Activated CD4-positive, alpha-beta memory T cell treated with anti-CD3 and anti-CD28 coated beads for 36 hours (primary cell): ENCODE measurements at regions of chr6 and their contacts with region 1.

Region 1: GRCh38 chr6:30821862-30822782 is 62.2 kb upstream of the DDR1 start:
- DNase-seq: no peak
- H3K4me3 Mint-ChIP-seq: no peak overlapping the region
- H3K27ac Mint-ChIP-seq: peak overlapping the region; percentile 78
- H3K4me1 Mint-ChIP-seq: peaks cover 76% of the 10 kb centered on the region
- H3K27me3 Mint-ChIP-seq: no peaks in the 10 kb centered on the region

Region 2: GRCh38 chr6:30678964-30679726 is 143.0 kb before region 1 on chr6:
- CTCF ChIA-PET with region 1: interaction called, 3 read pairs
- POLR2A ChIA-PET with region 1: no interaction called
- intact Hi-C with region 1: loop called (anchors 1 kb)
- DNase-seq: peak; percentile 94
- H3K4me3 Mint-ChIP-seq: peak overlapping the region; percentile 100
- H3K27ac Mint-ChIP-seq: peak overlapping the region; percentile 99
- H3K4me1 Mint-ChIP-seq: peaks cover 16% of the 10 kb centered on the region
- H3K27me3 Mint-ChIP-seq: no peaks in the 10 kb centered on the region

Region 3: DNA sequence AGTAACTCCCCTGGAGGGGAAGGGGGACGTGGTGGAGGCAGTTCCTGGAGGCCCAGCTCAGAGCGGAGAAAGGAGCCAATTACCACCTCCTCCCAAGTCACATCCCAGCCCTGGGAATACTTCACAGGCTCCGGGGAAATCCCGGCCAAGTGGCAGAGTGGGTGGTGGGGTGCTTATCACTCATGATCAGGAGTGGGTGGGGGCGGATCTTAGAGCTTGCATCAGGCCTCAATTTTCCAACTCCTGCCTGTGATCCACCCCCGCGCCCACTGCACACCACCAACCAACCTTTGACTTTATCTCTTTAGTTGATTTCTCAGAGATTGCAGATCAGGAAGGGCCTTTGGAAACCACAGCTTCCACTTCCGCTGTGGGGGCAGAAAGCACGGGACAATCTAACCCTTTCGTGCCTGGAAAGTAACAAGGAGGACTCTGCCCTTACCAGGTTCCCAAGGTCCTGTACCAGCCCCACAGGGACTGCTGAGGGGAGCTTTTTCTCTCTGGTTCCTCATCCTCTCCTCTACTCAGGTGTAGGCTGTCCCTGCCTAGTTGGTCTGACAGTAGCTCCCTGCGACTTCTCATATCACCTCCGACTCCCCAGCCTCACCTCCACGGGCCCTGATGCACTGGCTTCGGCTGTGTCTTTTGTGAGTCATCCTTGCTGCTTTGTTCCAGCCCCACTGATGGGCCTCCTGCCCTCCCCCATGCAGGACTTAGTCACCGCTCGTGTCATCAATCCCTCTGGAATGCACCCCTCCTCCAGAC is 52.9 kb before region 1 on chr6:
- CTCF ChIA-PET with region 1: interaction called, 18 read pairs
- POLR2A ChIA-PET with region 1: interaction called, 16 read pairs
- intact Hi-C with region 1: loop called (anchors 1 kb)
- DNase-seq: peak; percentile 89
- H3K4me3 Mint-ChIP-seq: peak overlapping the region; percentile 52
- H3K27ac Mint-ChIP-seq: peak overlapping the region; percentile 93
- H3K4me1 Mint-ChIP-seq: peaks cover 65% of the 10 kb centered on the region
- H3K27me3 Mint-ChIP-seq: no peaks in the 10 kb centered on the region

Region 4: DNA sequence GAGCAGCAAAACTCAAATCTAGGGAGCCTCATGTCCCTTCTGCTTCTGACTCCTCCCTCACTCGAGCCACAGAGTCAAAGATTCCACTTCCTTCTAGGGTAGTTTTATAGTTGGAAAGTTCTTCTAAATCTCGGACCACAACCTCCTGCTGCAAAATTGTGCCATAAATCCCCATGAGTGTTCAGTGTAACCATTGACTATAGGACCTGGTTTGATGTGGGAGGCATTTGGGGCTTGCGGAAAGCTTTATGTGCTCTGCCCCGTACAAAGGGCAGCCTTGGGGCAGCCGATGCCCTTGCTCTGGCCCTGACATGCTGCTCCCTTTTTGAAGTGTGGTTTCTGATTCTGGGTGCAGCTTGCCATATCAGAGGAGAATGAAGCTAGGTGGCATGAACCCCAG is 34.2 kb before region 1 on chr6:
- CTCF ChIA-PET with region 1: interaction called, 23 read pairs
- POLR2A ChIA-PET with region 1: interaction called, 4 read pairs
- intact Hi-C with region 1: no loop called
- DNase-seq: peak; percentile 58
- H3K4me3 Mint-ChIP-seq: peak overlapping the region; percentile 48
- H3K27ac Mint-ChIP-seq: peak overlapping the region; percentile 89
- H3K4me1 Mint-ChIP-seq: peaks cover 61% of the 10 kb centered on the region
- H3K27me3 Mint-ChIP-seq: no peaks in the 10 kb centered on the region

Region 5: DNA sequence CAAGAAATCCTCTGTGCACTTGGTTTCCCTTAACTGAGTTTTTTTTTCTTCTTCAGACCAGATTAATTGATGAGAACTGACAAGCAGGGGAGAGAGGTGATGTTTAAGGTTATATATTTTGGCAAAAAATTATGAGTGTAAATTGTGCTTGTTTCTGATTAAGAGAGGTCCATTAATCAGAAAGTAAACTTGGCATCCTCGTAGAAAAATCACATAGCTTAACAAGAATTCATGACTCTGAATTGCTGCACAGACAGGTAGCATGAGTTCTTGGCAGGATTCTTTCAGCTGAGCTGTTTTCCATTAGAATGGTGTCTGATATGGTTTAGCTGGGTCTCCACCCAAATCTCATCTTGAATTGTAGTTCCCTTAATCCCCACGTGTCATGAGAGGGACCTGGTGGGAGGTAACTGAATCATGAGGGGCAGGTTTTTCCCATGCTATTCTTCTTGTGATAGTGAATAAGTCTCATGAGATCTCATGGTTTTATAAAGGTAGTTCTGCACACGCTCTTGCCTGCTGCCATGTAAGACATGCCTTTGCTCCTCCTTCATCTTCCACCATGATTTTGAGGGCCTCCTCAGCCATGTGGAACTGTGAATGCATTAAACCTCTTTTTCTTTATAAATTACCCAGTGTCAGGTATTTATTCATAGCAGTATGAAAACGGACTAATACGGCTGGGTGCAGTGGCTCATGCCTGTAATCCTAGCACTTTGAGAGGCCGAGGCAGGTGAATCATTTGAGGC is 28.0 kb after region 1 on chr6:
- CTCF ChIA-PET with region 1: no interaction called
- POLR2A ChIA-PET with region 1: no interaction called
- intact Hi-C with region 1: no loop called
- DNase-seq: no peak
- H3K4me3 Mint-ChIP-seq: no peak overlapping the region
- H3K27ac Mint-ChIP-seq: no peak overlapping the region
- H3K4me1 Mint-ChIP-seq: no peaks in the 10 kb centered on the region
- H3K27me3 Mint-ChIP-seq: peaks cover 2% of the 10 kb centered on the region

Region 6: DNA sequence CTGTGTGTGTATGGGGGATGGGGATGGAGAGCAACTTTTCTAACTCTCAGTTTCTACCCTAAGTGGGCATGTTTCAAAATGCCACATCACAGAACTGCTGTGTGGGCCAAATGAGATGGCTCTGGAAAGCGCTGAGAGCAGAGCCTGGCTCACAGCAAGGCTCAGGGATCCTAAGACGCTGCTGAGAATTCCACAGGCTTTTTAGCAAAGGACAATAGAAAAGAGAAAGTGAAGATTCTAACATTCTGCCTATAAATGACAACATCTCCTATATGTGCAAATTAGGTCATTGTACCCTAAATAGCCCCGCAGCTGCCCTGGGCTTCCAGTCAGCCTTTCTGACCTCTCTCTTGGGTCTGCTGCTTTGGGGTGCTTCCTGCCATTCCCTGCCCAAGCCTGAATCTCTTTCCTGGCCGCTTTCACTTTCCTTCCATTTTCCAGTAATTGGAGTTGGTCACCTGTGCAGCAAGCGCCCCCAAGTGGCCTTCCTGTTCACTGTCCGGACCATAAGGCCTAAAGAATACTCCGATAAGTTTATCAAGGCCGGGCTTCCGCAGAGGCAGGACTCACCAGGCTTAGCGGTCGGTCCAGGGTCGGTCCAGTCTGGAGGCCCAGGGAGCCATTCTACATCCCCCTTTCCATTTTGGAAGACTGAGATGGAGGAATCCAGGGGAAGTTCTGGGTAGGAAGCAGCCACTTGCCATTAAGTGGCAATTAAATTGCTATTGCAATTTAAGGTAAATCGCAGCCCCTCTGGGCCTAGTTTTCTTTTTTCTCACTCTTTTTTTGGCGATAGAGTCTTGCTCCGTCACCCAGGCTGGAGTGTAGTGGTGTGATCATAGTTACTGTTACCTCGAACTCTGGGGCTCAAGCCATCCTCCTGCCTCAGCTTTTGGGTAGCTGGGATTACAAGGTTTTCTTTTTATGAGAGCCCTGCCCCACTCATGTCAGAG is 55.6 kb after region 1 on chr6:
- CTCF ChIA-PET with region 1: interaction called, 37 read pairs
- POLR2A ChIA-PET with region 1: interaction called, 3 read pairs
- intact Hi-C with region 1: no loop called
- DNase-seq: peak; percentile 83
- H3K4me3 Mint-ChIP-seq: peak overlapping the region; percentile 62
- H3K27ac Mint-ChIP-seq: peak overlapping the region; percentile 78
- H3K4me1 Mint-ChIP-seq: peaks cover 20% of the 10 kb centered on the region
- H3K27me3 Mint-ChIP-seq: no peaks in the 10 kb centered on the region

Region 7: GRCh38 chr6:30914076-30914853 is 92.1 kb after region 1 on chr6 and contains the start of gene VARS2:
- CTCF ChIA-PET with region 1: interaction called, 63 read pairs
- POLR2A ChIA-PET with region 1: interaction called, 7 read pairs
- intact Hi-C with region 1: no loop called
- DNase-seq: peak; percentile 93
- H3K4me3 Mint-ChIP-seq: peak within 1 kb of the TSS; percentile 94
- H3K27ac Mint-ChIP-seq: peak within 1 kb of the TSS; percentile 82
- H3K4me1 Mint-ChIP-seq: peaks cover 29% of the 10 kb centered on the region
- H3K27me3 Mint-ChIP-seq: no peaks in the 10 kb centered on the region
- total RNA-seq, gene VARS2: 56.9 to 68.9 TPM

Region 8: DNA sequence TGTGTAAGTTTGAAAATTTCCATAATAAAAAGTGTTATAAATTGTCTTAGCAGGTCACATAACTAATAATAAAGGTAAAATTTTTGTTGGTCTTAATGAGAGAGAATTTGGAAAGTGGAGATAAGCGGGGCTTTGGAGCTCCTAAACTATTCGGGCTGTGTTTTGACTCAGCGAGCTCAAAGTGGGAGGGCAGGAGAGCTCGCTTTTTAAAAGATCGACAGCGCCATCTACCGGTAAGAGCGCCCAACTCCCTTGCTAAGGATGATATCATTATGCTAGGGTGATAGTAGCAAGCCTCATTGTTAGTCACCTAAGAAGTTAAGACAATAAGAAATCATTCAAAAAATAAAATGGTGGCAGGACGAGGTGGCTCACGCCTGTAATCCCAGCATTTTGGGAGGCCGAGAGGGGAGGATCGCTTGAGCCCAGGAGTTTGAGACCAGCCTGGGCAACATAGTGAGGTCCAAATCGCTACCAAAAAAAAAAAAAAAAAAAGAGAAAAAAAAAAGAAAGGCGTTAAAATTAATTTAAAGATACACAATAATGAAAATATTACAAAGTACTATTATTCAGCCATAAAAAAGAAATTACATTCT is 265.5 kb after region 1 on chr6:
- CTCF ChIA-PET with region 1: interaction called, 44 read pairs
- POLR2A ChIA-PET with region 1: no interaction called
- intact Hi-C with region 1: no loop called
- DNase-seq: peak; percentile 92
- H3K4me3 Mint-ChIP-seq: peak overlapping the region; percentile 12
- H3K27ac Mint-ChIP-seq: peak overlapping the region; percentile 45
- H3K4me1 Mint-ChIP-seq: peaks cover 11% of the 10 kb centered on the region
- H3K27me3 Mint-ChIP-seq: no peaks in the 10 kb centered on the region

Region 9: DNA sequence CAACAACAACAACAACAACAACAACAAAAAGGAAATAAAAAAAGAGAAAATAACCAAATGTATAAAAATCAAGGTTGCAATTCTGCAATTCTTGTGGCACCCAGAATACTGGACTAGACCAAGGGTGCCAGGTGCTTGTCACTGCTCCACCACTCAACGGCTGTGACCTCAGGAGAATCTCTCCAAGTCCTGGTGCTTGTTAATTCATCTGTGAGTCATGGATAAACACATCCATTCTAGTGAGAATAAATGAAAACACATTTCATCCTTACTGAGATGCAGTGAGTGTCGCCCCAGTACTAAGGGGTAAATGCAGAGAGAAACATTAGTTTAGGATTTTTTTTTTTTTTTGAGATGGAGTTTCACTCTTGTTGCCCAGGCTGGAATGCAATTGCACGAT is 417.7 kb after region 1 on chr6:
- CTCF ChIA-PET with region 1: no interaction called
- POLR2A ChIA-PET with region 1: no interaction called
- intact Hi-C with region 1: no loop called
- DNase-seq: no peak
- H3K4me3 Mint-ChIP-seq: no peak overlapping the region
- H3K27ac Mint-ChIP-seq: no peak overlapping the region
- H3K4me1 Mint-ChIP-seq: peaks cover 5% of the 10 kb centered on the region
- H3K27me3 Mint-ChIP-seq: peaks cover 1% of the 10 kb centered on the region